ENCODE measurements at regions of chr4 and their contacts with region 1.

Region 1: DNA sequence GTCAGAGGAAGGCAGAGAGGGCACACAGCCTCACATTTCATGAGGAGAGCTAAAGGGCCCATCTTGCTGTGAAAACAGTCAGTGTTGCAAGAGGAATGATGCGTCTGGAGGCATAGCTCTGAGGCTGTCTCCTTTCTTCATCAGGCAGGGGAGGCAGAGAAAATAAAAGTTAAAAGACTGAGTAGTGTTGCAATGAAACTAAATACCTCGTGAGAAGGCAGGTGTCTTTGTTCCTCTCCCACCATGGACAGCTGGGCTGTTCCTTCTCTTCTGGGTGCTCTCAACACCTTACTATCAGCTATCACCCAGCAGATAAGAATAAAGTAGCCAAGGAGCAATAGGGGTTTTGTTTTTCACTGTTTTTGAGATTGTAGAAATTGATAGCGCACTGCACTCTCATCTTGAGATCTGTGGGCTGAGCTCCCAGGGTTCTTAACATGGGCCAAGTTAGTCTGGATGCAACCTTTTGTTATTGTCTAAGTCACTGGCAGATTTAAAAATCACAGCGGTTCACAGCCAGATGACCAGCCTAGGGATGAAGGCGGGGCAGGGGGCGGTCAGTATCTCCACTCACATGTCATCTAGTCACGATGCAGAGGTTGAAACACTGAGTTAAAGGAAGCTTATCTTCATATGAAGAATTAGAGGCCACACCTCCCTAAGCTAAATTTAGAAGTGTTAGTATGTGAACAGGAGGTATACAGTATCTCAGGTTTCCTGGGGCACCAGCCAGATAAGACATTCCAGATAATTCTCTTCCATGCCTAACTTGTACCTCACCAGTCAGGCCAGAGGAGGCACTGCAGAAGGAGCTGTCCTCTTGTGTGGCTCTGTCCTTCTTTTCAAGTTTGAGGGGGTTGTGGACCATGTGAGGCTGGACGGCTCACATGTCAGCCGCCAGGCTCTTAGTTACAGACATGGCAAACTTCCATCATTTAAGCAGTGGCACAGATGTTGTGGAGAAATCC is 36.9 kb downstream of the PARM1 start:
- DNase-seq: no peak
- ATAC-seq: peak; percentile 88

Region 2: GRCh38 chr4:75015627-75016026 is 45.8 kb after region 1 on chr4:
- intact Hi-C with region 1: loop called (anchors 5 kb)
- DNase-seq: no peak
- ATAC-seq: peak; percentile 86

Region 3: DNA sequence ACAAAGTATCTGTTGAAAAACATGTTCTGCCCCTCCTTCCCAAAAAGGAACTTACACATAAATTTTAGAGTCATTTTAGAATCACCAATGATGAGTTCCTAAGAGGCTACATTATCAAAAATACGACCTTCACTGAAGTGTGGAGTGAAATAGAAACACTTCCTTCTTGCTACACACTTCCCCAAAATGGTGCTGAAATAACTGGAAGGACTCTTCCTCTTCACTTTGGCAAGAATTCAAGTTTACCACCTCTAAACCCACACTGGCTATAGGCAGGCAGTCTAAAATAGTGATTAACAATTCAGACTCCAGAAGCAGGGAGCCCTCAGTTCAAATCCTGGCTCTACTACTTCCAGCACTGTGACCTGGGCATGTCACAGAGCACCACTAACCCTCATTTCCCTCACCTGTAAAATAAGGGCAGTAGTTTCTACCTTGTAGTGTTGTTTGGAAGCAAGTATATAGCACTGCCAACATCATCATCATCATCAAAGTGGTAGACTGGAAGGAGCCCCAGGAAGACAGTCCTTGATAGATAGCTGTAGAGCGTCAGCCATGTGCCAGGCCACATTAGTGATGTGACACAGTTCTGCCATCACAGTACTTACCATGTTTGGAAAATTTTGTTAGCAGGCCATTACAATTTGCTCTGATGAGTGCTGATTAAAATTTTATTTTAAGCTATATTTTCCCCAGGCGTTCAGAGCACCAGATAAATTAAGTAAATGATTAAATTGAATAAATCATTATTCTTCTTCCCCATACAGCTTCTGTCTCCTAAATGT is 66.4 kb after region 1 on chr4:
- intact Hi-C with region 1: loop called (anchors 5 kb)
- DNase-seq: no peak
- ATAC-seq: no peak